ENCODE measurements at regions of chr2 and their contacts with region 1.

Region 1: GRCh38 chr2:46650556-46651001 is 171.2 kb downstream of the TMEM247 start:
- DNase-seq: no peak
- H3K4me3 ChIP-seq: no peak overlapping the region
- H3K27ac ChIP-seq: no peak overlapping the region
- H3K4me1 ChIP-seq: peaks cover 5 to 25% (median 12%) of the 10 kb centered on the region in 4 donors
- H3K27me3 ChIP-seq: no peaks in the 10 kb centered on the region
- CTCF ChIP-seq: peak; percentile 90 to 99 (median 94)
- EP300 ChIP-seq: no peak
- POLR2A ChIP-seq: no peak

Region 2: DNA sequence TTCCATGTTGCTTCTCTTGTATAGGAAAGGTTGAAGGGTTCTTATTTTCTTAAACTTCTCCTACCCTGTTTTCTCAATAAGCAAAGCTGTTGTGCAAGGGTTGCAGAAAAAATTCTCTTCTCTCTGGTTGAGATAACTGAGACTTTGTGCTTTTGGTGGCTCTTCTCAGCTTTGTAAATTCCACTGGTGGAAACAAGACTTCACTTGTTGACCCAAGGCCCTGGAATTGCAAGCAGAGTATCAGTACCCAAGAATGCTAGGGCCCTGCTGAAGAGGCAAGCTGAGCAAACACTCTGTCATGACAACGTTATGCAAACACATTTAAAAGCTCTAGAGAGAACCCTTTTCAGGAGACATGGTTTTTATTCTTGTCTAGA is 648.1 kb before region 1 on chr2:
- intact Hi-C with region 1: loop called (anchors 10 kb)
- DNase-seq: peak; percentile 55
- H3K4me3 ChIP-seq: no peak overlapping the region
- H3K27ac ChIP-seq: peak overlapping the region; percentile 44 to 67 (median 60)
- H3K4me1 ChIP-seq: peaks cover 18 to 38% (median 28%) of the 10 kb centered on the region in 4 donors
- H3K27me3 ChIP-seq: no peaks in the 10 kb centered on the region
- CTCF ChIP-seq: no peak
- EP300 ChIP-seq: no peak
- POLR2A ChIP-seq: no peak